Common myeloid progenitor, CD34-positive (primary cell): ENCODE measurements at regions of chr15 and their contacts with region 1.

Region 1: DNA sequence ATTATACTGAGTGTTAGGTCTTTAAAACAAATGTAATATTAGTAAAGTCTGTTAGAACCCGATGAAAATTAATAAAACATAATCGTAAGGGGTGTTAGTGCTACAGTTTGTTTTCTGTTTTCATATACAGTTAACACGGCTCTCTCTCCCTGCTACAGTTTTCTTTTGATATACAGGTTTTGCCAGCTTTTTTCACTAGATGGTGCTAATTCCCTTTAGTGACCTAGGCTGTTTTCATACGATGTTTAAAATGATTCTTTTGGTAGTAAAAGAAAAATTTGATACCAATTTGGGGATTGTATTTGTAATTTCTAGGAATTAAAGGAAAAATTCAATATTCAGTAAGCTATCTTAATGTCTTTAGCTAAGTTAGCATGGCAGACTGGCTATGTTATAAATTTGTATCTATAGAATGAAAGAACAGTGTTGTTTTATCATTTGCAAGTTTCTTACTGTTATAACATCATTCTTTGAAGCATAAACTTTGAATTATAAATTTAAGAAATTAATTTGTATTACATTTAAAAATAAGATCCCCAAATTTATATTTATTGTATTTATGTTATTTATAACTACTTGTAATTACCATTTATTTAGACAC is 11.5 kb downstream of the APH1B start:
- DNase-seq: peak; percentile 57 to 80 (median 73)
- H3K4me3 ChIP-seq: no peak overlapping the region
- H3K27ac ChIP-seq: no peak overlapping the region
- H3K4me1 ChIP-seq: peaks cover 0 to 10% (median 0%) of the 10 kb centered on the region in 4 experiments
- H3K27me3 ChIP-seq: no peaks in the 10 kb centered on the region

Region 2: DNA sequence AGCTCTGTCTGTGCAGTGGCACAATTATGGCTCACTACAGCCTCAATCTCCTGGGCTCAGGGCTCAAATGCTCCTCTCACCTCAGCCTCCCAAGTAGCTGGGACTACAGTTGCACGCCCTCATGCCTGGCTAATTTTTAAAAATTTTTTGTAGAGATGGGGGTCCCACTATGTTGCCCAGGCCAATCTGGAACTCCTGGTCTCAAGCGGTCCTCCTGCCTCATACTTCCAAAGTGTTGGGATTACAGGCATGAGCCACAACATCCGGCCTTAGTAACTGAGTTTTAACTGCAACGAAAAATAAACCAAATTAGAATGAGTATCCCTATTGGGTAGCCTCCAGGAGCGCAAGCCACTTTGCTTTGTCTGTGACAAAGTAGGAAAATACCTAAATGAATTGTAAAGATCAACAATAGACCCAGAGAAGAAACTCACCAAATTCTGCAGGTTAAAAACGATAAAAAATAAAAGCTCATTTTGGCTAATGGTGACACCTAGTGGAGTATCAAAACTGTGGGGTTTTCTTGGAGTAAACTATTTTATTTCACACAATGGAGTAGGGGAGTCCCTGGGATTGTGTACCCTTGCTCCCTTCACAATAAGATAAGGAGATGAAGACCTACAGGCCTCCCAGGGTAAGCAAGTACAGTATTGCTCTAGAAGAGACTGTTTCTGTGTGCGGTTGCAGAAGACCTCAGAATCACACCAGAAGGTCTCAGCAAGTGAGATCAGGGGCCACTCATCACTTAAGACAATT is 113.8 kb after region 1 on chr15:
- CTCF ChIA-PET with region 1: interaction called, 57 read pairs
- POLR2A ChIA-PET with region 1: no interaction called
- DNase-seq: peak in 2 of 3 donors; percentile 54 to 61
- H3K4me3 ChIP-seq: no peak overlapping the region
- H3K27ac ChIP-seq: no peak overlapping the region
- H3K4me1 ChIP-seq: peaks cover 0 to 20% (median 12%) of the 10 kb centered on the region in 4 experiments
- H3K27me3 ChIP-seq: no peaks in the 10 kb centered on the region

Region 3: DNA sequence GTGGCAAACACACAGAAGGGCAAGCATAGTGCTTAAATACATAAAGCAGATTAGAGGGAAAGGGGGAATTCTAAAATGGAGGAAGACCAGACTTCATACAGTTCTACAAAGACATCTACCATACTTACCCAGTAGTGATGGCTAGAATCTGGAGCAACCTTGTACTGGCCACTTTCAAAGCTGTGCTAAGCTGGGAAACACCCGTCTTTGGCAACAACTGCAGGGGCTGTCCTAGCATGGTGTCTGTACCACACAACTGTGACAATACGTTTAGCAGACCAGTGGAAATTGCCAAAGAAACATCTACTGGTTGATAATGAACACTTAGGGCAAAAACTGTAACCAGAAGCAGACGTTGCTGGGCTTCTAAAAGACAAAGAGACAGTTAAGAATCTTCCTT is 405.3 kb after region 1 on chr15:
- CTCF ChIA-PET with region 1: no interaction called
- POLR2A ChIA-PET with region 1: no interaction called
- DNase-seq: no peak
- H3K4me3 ChIP-seq: no peak overlapping the region
- H3K27ac ChIP-seq: no peak overlapping the region
- H3K4me1 ChIP-seq: no peaks in the 10 kb centered on the region
- H3K27me3 ChIP-seq: no peaks in the 10 kb centered on the region